ENCODE measurements at regions of chr3 and their contacts with region 1.

Region 1: DNA sequence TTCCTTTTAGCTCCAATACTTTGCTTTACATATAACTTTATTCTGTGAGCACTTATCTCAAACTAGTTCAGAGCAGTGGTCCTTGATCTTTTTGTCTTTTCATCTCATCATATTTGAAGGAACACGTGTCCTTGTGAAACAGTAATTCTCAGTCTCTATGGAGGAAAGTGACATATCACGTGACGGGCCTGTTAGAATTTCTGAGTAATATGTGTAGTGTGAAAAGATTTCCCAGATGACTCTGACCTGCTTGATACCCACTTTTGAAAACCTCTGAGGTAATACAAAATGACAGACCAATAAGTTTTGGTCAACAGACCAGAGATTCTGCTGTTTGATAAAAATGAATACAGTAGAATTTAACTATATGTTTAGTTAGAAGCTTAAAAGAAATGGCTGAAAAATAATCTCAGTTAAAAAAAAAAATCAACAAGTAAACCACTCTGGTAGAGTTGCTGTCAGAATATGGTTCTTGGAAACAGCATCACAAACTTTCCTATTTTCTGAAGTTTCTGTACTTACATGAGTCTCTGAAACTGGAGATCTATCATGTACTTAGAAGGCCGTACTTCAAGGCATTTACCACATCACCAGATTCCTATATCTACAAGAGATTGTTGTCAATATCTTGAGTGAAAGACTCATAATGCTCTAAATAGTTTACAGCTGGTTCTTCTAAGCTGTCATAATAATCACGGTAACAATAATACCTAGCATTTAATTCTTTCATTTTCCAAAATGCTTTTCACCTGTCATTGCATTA is 590.2 kb upstream of the TBL1XR1 start:
- DNase-seq: no peak
- H3K4me3 Mint-ChIP-seq: no peak overlapping the region
- H3K27ac Mint-ChIP-seq: peak overlapping the region; percentile 53
- H3K4me1 Mint-ChIP-seq: peaks cover 15% of the 10 kb centered on the region
- H3K27me3 Mint-ChIP-seq: no peaks in the 10 kb centered on the region

Region 2: GRCh38 chr3:177314897-177315296 is 472.6 kb before region 1 on chr3:
- intact Hi-C with region 1: loop called (anchors 5 kb)
- DNase-seq: no peak
- H3K4me3 Mint-ChIP-seq: no peak overlapping the region
- H3K27ac Mint-ChIP-seq: peak overlapping the region; percentile 49
- H3K4me1 Mint-ChIP-seq: peaks cover 12% of the 10 kb centered on the region
- H3K27me3 Mint-ChIP-seq: peaks cover 2% of the 10 kb centered on the region

Region 3: GRCh38 chr3:177426878-177427495 is 360.5 kb before region 1 on chr3:
- intact Hi-C with region 1: loop called (anchors 1 kb)
- DNase-seq: peak; percentile 58
- H3K4me3 Mint-ChIP-seq: peak overlapping the region; percentile 54
- H3K27ac Mint-ChIP-seq: peak overlapping the region; percentile 85
- H3K4me1 Mint-ChIP-seq: peaks cover 35% of the 10 kb centered on the region
- H3K27me3 Mint-ChIP-seq: peaks cover 2% of the 10 kb centered on the region

Region 4: DNA sequence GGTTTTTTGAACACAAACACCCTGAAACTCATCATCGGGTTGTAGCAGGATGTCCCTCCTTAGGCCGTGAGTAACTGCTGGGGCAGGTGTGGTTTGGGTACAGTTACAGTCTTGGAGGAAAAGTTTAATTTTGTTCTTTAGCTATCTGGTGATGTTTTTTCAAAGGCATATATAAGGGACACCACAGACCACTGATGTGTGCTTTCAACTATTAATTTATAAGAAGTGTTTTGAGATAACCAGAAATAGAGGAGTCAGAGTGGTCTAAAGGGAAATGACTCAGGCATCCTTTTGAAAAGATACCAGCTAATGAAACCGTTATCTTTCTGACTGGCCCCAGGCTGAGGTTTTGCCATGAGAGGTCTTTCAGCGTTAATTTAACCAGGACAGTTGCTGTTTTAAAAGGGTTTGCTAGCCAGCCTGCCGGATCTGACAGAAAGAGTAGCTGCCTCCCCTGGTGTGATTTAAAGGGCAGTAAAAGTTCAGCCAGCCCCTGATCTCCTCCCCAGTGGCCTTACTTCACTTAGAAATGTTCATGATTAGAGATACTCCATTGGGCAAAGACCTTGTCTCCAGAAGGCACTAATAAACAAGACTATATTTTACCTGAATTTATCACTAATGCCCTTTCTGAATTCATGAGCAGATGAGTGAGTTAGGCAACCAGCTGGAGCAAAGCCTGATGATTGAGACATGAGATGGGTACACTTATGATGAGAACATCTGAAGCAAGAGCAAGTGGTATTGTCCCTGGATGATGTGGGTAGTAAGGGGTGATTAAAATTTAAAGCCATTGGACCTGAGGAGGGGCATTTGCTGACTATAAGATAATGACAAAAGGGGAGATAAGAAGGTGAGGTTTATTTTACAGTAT is 107.7 kb before region 1 on chr3:
- intact Hi-C with region 1: loop called (anchors 5 kb)
- DNase-seq: peak; percentile 9
- H3K4me3 Mint-ChIP-seq: no peak overlapping the region
- H3K27ac Mint-ChIP-seq: peak overlapping the region; percentile 24
- H3K4me1 Mint-ChIP-seq: peaks cover 22% of the 10 kb centered on the region
- H3K27me3 Mint-ChIP-seq: no peaks in the 10 kb centered on the region

Region 5: GRCh38 chr3:177810162-177810623 is 22.7 kb after region 1 on chr3:
- intact Hi-C with region 1: loop called (anchors 1 kb)
- DNase-seq: no peak
- H3K4me3 Mint-ChIP-seq: no peak overlapping the region
- H3K27ac Mint-ChIP-seq: no peak overlapping the region
- H3K4me1 Mint-ChIP-seq: peaks cover 17% of the 10 kb centered on the region
- H3K27me3 Mint-ChIP-seq: no peaks in the 10 kb centered on the region

Region 6: DNA sequence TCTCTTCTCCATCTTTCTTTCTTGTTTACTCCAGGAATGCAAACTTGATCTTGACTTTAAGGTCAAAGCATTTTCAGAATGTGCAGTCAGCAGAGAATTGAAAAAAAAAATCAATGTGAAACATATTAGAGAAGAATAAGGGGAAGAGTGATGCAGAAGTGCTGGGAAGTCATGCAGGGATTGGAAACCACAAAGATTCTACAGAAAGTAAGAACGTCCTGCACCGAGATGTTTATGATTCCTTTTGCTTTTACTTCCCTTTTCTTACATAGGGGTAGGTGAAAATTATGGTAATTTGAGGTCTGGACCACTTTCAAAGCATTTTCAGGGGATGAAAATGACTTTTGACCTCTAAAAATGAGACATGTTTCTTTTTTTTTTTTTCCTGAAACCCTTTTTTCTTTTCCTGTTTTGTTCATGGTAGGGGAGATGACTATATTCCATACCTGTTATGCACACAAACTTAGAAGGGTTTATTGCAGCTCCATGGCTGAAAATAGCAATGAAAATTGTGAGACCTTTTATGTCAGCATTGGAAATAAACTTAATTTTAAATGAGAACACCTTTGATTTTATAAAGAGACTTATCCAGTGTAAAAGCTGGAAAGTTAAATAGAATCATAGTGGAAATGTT is 33.3 kb after region 1 on chr3:
- intact Hi-C with region 1: no loop called
- DNase-seq: no peak
- H3K4me3 Mint-ChIP-seq: no peak overlapping the region
- H3K27ac Mint-ChIP-seq: no peak overlapping the region
- H3K4me1 Mint-ChIP-seq: peaks cover 8% of the 10 kb centered on the region
- H3K27me3 Mint-ChIP-seq: no peaks in the 10 kb centered on the region

Region 7: GRCh38 chr3:178001670-178002101 is 214.2 kb after region 1 on chr3:
- intact Hi-C with region 1: loop called (anchors 1 kb)
- DNase-seq: peak; percentile 21
- H3K4me3 Mint-ChIP-seq: no peak overlapping the region
- H3K27ac Mint-ChIP-seq: peak overlapping the region; percentile 78
- H3K4me1 Mint-ChIP-seq: peaks cover 38% of the 10 kb centered on the region
- H3K27me3 Mint-ChIP-seq: no peaks in the 10 kb centered on the region